ENCODE measurements at regions of chr11 and their contacts with region 1.

Region 1: DNA sequence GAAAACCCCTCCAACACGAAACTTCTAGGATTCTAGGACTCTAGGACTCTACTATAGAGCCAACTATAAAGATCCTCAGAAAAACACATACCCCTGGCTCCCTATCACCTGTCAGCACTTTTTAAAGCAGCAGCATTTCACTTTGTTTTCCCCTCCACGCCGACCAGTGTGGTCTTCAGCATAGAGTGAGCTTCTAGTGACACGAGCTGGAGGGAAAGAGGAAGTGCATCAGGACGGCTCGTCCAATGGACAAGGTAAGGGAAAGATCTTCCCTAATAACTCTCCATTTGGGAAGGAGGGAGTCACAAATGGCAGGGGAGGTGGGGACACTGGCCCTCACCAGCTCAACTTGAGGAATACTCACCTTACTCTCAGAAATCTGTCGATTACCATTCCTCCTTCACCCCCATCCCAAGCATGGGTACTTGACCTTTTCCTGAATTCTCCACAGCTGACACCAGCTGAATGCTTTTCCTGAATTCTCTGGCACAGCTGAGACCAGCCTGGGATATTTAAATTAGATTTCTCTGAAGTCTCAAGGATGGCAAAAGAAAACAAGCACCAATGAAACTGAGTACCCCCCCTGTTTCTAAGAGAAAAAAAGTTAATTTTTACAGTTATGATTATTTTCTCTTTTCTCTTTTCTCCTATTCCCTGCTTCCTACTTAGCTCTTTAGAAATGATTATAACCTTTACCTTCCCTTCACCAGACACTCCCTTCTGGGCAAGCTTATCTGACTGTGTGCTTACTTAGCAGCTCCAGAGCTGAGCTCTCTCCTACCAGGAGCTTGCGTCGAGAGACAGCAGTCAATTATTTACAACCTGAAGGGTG is 33.3 kb upstream of the NNMT start:
- DNase-seq: peak in 1 of 3 donors; percentile 55
- ATAC-seq: peak; percentile 3 to 44
- H3K4me3 ChIP-seq: no peak overlapping the region
- H3K27ac ChIP-seq: no peak overlapping the region
- H3K4me1 ChIP-seq: peaks cover 11% of the 10 kb centered on the region
- H3K27me3 ChIP-seq: no peaks in the 10 kb centered on the region

Region 2: GRCh38 chr11:113896156-113896879 is 366.6 kb before region 1 on chr11:
- intact Hi-C with region 1: loop called (anchors 2 to 10 kb)
- DNase-seq: peak in 1 of 3 donors; percentile 78
- ATAC-seq: peak; percentile 81 to 82
- H3K4me3 ChIP-seq: no peak overlapping the region
- H3K27ac ChIP-seq: no peak overlapping the region
- H3K4me1 ChIP-seq: no peaks in the 10 kb centered on the region
- H3K27me3 ChIP-seq: no peaks in the 10 kb centered on the region

Region 3: GRCh38 chr11:113906038-113906437 is 356.9 kb before region 1 on chr11:
- intact Hi-C with region 1: loop called in 1 of 4 experiments (anchors 10 kb)
- DNase-seq: no peak
- ATAC-seq: no peak
- H3K4me3 ChIP-seq: no peak overlapping the region
- H3K27ac ChIP-seq: no peak overlapping the region
- H3K4me1 ChIP-seq: no peaks in the 10 kb centered on the region
- H3K27me3 ChIP-seq: no peaks in the 10 kb centered on the region

Region 4: GRCh38 chr11:113994077-113994954 is 268.6 kb before region 1 on chr11:
- intact Hi-C with region 1: loop called (anchors 2 to 10 kb)
- DNase-seq: peak in 1 of 3 donors; percentile 58
- ATAC-seq: peak in 1 of 2 donors; percentile 26
- H3K4me3 ChIP-seq: no peak overlapping the region
- H3K27ac ChIP-seq: no peak overlapping the region
- H3K4me1 ChIP-seq: no peaks in the 10 kb centered on the region
- H3K27me3 ChIP-seq: no peaks in the 10 kb centered on the region

Region 5: DNA sequence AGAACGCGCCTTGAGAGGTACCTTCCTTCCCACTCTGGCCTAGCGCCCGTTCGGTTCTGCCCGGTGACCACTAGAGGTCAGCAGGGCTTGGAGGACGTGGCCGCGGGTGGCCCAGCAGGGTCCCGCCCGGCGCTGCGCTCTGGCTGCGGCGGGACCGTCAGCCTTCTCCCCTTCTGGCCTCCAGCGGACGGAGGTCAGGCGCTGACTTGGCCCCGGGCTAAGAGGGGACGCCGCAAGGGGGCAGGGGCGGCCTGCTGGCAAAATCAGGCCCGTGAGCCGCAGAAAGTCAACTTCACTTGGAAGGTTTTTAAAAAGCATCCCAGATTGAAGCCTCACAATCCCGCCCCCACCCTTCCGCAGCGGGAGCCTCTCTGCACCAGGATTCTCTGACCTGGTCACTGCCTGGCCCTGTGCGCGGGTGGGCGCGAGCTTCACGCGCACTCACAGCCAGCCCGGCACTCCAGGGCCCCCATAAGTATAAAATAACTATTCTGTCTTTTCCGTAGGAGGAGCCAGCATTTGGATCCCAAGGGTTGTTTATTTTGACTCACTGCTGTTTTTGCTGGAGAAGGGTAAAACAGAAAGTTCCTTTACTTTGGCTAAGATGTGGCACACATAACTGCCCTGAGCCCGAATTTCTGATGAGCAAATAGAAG is 226.6 kb before region 1 on chr11:
- intact Hi-C with region 1: loop called in 3 of 4 experiments (anchors 2 to 5 kb)
- DNase-seq: peak; percentile 88 to 94 (median 94)
- ATAC-seq: peak; percentile 94 to 96
- H3K4me3 ChIP-seq: peak overlapping the region; percentile 15
- H3K27ac ChIP-seq: peak overlapping the region; percentile 38
- H3K4me1 ChIP-seq: peaks cover 2% of the 10 kb centered on the region
- H3K27me3 ChIP-seq: no peaks in the 10 kb centered on the region

Region 6: GRCh38 chr11:114099392-114100178 is 163.3 kb before region 1 on chr11:
- intact Hi-C with region 1: no loop called
- DNase-seq: no peak
- ATAC-seq: peak in 1 of 2 donors; percentile 26
- H3K4me3 ChIP-seq: no peak overlapping the region
- H3K27ac ChIP-seq: no peak overlapping the region
- H3K4me1 ChIP-seq: peaks cover 41% of the 10 kb centered on the region
- H3K27me3 ChIP-seq: no peaks in the 10 kb centered on the region

Measured in right cardiac atrium (tissue), 5 donors.